ENCODE measurements at regions of chr10 and their contacts with region 1.

Region 1: GRCh38 chr10:77649333-77650331 is 12.0 kb upstream of the KCNMA1 start:
- DNase-seq: peak; percentile 13
- H3K4me3 ChIP-seq: no peak overlapping the region
- H3K27ac ChIP-seq: no peak overlapping the region
- H3K4me1 ChIP-seq: peaks cover 7% of the 10 kb centered on the region
- H3K27me3 ChIP-seq: no peaks in the 10 kb centered on the region
- CTCF ChIP-seq: no peak

Region 2: GRCh38 chr10:77710759-77711682 is 61.4 kb after region 1 on chr10:
- CTCF ChIA-PET with region 1: no interaction called
- POLR2A ChIA-PET with region 1: no interaction called
- intact Hi-C with region 1: loop called (anchors 5 kb)
- DNase-seq: peak; percentile 76
- H3K4me3 ChIP-seq: peak overlapping the region; percentile 31
- H3K27ac ChIP-seq: no peak overlapping the region
- H3K4me1 ChIP-seq: peaks cover 10% of the 10 kb centered on the region
- H3K27me3 ChIP-seq: no peaks in the 10 kb centered on the region
- CTCF ChIP-seq: peak; percentile 99

Measured in A673 (cell line).